Esophagus squamous epithelium (tissue), 5 donors: ENCODE measurements at regions of chrX and their contacts with region 1.

Region 1: DNA sequence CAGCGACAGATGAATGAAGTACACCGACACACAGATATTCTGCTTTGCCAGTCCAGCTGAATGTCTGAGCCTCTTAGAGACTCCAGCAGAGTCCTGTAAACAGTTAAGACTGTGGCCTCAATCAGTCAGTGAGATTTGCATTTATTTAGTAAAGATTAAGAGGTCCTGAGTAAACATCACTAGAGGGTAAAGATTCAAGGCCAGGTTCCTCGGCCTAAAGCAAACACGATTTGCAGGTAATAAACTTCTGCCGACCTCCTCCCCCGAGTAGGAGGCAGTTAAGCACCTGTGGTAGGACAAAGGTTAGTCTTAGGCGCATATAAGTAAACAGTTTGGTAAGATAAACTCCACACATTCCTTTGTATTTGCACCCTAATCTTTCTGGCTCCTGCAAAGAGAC is 99.6 kb downstream of the CFAP47 start:
- DNase-seq: no peak
- H3K4me3 ChIP-seq: no peak overlapping the region
- H3K27ac ChIP-seq: no peak overlapping the region
- H3K4me1 ChIP-seq: no peaks in the 10 kb centered on the region
- H3K27me3 ChIP-seq: no peaks in the 10 kb centered on the region
- CTCF ChIP-seq: no peak
- POLR2A ChIP-seq: no peak

Region 2: GRCh38 chrX:35847736-35848135 is 171.4 kb before region 1 on chrX:
- intact Hi-C with region 1: no loop called
- DNase-seq: no peak
- H3K4me3 ChIP-seq: no peak overlapping the region
- H3K27ac ChIP-seq: no peak overlapping the region
- H3K4me1 ChIP-seq: no peaks in the 10 kb centered on the region
- H3K27me3 ChIP-seq: no peaks in the 10 kb centered on the region
- CTCF ChIP-seq: no peak
- POLR2A ChIP-seq: no peak

Region 3: GRCh38 chrX:36071061-36071460 is 51.9 kb after region 1 on chrX:
- intact Hi-C with region 1: loop called (anchors 10 kb)
- DNase-seq: no peak
- H3K4me3 ChIP-seq: no peak overlapping the region
- H3K27ac ChIP-seq: no peak overlapping the region
- H3K4me1 ChIP-seq: no peaks in the 10 kb centered on the region
- H3K27me3 ChIP-seq: no peaks in the 10 kb centered on the region
- CTCF ChIP-seq: no peak
- POLR2A ChIP-seq: no peak